Breast epithelium (tissue), 4 donors: ENCODE measurements at regions of chr2 and their contacts with region 1.

Region 1: DNA sequence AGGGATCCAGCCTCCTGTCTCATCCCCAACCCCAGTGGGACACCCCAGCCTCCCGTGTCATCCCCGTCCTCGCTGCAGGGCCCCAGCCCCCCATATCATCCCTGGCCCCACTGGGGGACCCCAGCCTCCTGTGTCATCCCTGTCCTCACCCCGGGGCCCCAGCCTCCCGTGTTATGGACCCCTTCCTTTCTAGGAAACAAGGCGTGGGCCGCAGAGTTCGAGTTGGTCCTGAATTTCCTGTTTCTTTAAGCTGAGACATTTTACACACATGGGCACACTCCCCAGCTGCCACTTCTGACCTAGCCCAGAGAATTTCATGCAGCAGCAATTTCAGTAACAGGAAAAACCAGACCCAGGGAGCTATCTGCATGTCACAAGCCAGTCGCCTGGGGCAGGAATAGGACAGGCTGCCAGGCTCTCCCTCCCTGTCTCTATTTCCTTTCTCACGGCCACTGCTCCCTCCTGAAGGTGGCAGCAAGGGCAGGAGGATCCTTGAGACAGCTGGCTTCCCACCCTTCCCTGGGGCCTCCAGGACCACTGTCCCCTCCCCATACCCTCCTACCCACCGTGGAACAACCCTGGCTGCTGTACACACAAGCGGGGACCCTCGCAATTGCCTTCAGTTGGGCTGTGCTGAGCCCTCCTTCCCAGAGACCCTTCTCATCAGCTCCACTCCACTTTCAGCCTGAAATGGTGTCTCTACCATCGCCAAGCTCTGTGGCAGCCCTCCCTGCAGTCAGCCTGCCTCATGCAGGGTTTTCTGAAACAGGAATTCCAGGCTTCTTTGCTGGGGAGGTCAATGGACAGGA is 141.9 kb upstream of the ID2 start:
- DNase-seq: peak; percentile 91
- H3K4me3 ChIP-seq: no peak overlapping the region
- H3K27ac ChIP-seq: peak overlapping the region; percentile 71 to 79
- H3K4me1 ChIP-seq: peaks cover 6 to 32% of the 10 kb centered on the region in 2 donors
- H3K27me3 ChIP-seq: no peaks in the 10 kb centered on the region
- CTCF ChIP-seq: peak in 2 of 3 donors; percentile 23 to 32
- POLR2A ChIP-seq: no peak

Region 2: GRCh38 chr2:8551622-8552074 is 11.7 kb after region 1 on chr2:
- intact Hi-C with region 1: loop called (anchors 1 kb)
- DNase-seq: no peak
- H3K4me3 ChIP-seq: no peak overlapping the region
- H3K27ac ChIP-seq: peak overlapping the region; percentile 6 to 63
- H3K4me1 ChIP-seq: no peaks in the 10 kb centered on the region
- H3K27me3 ChIP-seq: no peaks in the 10 kb centered on the region
- CTCF ChIP-seq: no peak
- POLR2A ChIP-seq: no peak

Region 3: GRCh38 chr2:8583400-8584173 is 43.6 kb after region 1 on chr2:
- intact Hi-C with region 1: no loop called
- DNase-seq: peak; percentile 68 to 86
- H3K4me3 ChIP-seq: peak overlapping the region in 1 of 3 donors; percentile 35
- H3K27ac ChIP-seq: no peak overlapping the region
- H3K4me1 ChIP-seq: no peaks in the 10 kb centered on the region
- H3K27me3 ChIP-seq: no peaks in the 10 kb centered on the region
- CTCF ChIP-seq: no peak
- POLR2A ChIP-seq: no peak

Region 4: GRCh38 chr2:9112079-9112721 is 572.3 kb after region 1 on chr2:
- intact Hi-C with region 1: no loop called
- DNase-seq: no peak
- H3K4me3 ChIP-seq: no peak overlapping the region
- H3K27ac ChIP-seq: peak overlapping the region in 1 of 2 donors; percentile 48
- H3K4me1 ChIP-seq: no peaks in the 10 kb centered on the region
- H3K27me3 ChIP-seq: no peaks in the 10 kb centered on the region
- CTCF ChIP-seq: no peak
- POLR2A ChIP-seq: no peak